ENCODE measurements at regions of chr14 and their contacts with region 1.

Region 1: DNA sequence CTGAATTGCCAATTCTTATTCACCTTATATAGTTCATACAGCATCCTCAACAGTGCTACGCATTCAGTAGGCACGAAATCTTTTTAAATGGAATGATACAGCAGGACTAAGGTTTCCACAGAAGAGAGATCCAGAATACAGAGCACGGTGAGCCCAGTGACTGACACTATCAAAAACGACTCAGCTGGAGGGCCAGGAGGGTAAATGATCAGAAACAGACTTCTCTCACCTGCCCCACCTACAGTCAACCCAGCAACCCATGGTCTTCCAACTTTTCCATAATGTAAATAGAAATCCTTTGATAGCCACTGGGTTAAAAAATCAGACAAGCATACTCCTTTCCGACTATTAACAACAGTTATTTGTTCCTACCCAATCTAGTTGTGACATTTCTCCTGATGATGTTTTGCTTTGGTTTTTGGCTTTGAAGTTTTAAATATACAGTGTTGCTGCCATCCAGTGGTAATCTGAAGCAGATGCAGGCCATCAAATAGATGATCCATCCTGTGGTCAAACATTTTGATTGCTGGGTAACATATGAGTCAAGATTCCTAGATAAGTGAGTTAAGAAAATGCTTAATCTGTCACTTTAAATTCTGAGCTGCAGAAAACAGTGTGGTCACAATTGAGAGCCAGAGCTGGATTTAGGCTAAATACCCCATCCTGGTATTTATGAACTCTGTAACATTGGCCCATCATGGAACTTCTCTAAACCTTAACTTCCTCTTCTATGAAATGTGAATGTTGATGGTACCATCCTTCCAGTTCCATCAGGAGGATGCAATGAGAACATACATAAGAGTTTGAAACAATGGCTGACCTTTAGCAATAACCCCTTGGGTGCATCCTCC is 42.0 kb downstream of the GPHB5 start:
- DNase-seq: no peak

Region 2: DNA sequence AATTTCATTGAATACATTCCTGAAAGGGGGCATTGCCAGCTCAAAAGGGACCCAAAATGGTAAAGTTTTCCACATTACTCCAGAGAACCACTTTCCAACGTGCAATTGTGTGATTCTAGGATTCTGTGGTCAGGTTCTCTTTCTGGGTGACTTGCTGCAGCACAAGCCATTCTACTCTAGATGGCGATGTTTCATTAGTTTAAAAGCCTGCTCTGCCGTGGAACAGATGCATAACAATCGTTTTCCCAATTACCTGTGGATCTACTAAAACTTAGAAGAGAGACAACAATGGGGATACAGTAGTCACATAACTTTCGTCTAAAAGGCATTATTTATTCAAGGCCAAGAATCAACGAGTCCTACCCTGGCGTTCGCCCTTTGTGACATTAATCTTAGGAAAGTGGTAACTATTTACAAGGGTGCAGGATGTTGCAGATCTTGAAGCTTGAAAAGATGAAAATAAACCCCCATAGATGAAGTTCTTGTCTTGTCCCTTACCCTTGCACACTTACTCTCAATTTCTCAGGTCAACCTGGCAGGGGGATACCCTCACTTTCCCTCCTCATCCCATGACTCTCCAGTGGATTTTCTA is 1113.6 kb before region 1 on chr14:
- intact Hi-C with region 1: loop called (anchors 2 kb)
- DNase-seq: peak in 1 of 10 donors; percentile 15

Region 3: GRCh38 chr14:62179367-62180018 is 1097.2 kb before region 1 on chr14:
- intact Hi-C with region 1: loop called (anchors 1 kb)
- DNase-seq: peak in 8 of 10 donors; percentile 16 to 91 (median 60)

Region 4: GRCh38 chr14:63174760-63175211 is 101.9 kb before region 1 on chr14:
- intact Hi-C with region 1: loop called (anchors 1 kb)
- DNase-seq: no peak

Region 5: DNA sequence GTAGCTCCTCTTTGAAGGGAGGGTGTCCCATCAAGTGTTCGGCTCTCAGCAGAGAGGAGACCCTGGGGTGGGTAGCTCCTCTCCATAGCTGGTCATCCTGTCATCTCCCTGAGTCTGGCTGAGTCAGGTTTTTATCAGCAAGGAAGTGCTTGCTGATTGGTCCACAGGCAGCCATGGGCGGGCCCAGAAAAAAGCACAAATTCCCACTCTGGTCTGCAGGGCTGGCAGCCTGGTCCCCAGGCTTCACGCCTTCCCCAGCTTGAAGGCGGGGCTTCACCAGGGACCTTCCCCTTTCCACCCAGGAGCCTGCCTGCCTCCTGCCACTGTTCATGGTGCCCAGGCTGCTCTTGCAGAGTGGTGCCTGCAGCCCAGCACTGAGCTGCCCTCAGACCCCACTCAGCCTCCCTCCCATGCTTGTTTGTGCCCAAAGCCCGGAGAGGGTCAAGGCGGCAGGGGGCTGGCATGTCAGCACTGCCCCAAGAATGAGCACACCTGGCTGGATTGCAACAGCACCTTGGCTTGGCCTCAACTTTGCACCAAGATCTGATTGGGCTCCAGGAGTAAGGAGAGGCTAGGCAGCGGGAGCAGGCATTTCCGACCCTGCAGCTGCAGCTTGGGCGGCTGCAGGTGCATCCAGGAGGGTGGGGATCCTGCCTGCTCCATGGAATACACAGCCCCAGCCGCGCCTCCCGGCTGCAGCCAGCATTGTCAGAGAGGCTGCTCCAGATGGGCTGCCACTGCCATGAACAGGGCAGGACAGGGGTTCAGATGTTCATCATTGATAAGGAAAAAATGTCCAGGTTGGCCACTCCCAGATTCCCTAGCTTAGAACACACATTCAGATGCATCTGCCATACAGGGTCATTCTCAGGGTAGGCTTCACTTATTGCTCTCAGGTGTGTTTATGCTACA is 387.0 kb after region 1 on chr14:
- intact Hi-C with region 1: no loop called
- DNase-seq: no peak